Posterior vena cava (tissue), 2 donors: ENCODE measurements at regions of chr7 and their contacts with region 1.

Region 1: DNA sequence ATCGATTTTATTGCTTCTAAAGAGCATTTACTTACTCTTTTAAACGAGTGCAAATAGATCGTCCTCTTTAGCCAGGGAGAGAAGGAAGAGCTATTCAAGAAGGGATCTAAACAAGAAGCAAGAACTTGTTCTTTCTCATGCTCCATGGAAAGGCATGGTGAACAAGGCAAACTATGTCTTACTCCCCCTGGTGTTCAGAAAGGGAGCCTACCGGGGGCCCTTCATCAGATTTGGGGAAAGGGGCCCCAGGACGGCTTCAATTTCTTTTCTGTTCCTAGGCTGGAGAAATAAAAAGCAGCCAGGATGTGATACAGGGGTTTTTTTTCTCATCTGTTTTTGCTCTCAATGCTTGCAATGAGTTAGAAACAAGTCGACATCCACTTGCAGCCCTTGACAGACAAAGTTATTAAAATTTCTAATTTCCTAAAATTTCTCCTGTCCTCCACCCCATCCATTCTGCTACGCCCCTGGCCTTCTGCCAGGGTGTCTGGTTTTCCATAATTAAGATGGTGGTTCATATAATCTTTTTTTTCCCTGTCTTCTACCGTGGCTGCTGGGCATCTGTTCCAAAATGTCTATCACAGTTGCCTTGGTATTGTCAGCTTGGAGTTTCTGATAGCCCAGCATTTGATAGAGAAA is 214.4 kb downstream of the CREB5 start:
- DNase-seq: no peak

Region 2: DNA sequence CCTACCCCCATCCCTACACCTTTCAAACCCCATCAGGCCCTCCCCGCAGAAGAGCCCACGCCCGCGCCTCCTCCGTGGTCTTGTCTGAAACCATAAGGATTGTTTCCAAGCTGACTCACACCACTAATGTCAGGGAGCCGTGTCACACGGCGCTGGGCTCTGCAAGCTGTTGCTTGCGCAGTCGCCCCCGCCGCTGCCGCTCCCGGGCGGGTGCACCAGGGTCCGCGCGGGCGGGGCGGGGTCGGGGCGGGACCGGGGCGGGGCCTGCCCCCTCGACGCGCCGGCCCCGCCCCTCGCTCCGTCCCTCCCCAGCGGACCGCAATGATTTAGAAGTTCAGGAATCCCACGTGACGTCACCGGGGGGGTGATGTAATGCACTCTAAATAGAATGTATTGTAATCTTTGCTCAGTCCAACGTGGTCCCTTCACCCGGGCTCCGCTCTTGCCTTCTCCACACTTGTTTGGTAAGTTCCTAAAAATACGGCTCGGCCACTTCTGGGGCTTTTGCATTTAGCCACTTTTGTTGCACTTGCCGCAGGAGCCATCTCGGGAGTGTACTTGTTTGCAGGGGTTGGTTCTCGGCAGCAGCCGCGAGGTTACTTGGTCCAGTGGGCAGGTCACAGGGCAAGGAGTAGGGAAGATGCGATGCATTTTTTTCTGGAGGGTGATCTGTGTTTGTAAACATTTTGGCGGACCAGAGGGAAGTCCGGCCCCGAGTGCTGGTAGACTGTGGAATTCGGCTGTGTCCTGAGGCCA is 217.6 kb before region 1 on chr7:
- intact Hi-C with region 1: loop called in 1 of 2 experiments (anchors 5 kb)
- DNase-seq: peak; percentile 97

Region 3: GRCh38 chr7:28685644-28686417 is 59.1 kb after region 1 on chr7:
- intact Hi-C with region 1: loop called in 1 of 2 experiments (anchors 5 kb)
- DNase-seq: peak; percentile 96